ENCODE measurements at regions of chr4 and their contacts with region 1.

Region 1: DNA sequence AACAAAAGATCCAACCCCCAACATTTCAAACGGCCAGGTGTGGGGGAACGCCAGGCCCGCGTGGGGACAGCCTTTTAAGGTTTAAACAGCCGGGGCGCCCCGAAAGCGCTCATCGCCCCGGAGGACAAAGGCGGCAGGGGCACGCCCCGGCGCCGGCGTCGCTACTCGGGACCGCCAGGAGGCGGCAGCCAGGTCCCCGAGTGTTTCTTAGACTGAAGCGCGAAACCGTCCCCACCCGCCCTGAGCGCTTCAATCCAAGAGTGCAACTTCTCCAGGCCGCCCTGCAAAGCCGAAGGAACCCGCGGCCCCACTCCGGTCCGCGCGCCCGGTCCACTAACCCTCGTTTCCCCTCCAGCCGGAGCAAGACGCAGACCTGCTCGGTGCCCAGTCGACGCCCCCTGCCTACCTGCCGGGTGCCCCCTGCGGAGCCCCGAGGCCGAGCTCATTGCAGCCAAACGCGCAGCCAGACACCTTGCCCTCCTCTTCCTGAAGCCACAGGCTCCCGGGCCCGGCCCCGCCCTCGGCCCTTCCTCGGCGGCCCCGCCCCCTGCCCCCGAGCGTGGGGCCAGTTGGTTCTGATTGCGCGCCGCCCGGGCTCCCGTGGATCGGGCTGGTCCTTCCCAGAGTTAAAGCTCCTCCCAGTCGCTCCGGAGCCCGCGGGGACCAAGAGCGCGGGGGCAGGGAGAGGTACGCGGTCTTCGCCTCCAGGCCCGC is at the start of gene CASP6:
- DNase-seq: peak; percentile 73
- ATAC-seq: peak; percentile 83
- H3K4me3 ChIP-seq: peak within 1 kb of the TSS; percentile 96
- H3K27ac ChIP-seq: peak within 1 kb of the TSS; percentile 25; the same call in 1 of the 2 replicates
- H3K4me1 ChIP-seq: peaks cover 9% of the 10 kb centered on the region
- H3K27me3 ChIP-seq: no peaks in the 10 kb centered on the region
- CTCF ChIP-seq: peak; percentile 59
- total RNA-seq, gene CASP6: 33.7 and 36.7 TPM in 2 replicates

Region 2: DNA sequence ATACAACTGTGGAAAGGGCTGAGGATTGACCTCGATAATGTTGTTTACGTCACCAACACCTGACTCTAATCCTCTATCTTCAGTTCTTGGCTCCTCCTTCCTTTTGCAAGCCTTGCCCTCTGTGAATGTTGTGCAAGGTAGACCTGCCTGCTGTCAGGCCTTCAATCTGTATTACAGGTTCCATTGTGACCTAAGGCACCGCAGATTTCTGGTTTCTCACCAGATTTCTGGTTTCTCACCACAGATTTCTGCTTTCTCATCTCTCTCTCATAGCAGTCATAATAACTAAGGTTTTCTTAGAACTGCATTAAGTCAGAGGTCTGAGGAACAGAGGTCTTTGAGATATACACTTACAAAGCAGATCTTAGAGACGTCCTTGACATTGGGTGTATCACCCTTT is 888.8 kb before region 1 on chr4:
- CTCF ChIA-PET with region 1: no interaction called
- POLR2A ChIA-PET with region 1: no interaction called
- intact Hi-C with region 1: no loop called
- DNase-seq: no peak
- ATAC-seq: no peak
- H3K4me3 ChIP-seq: no peak overlapping the region
- H3K27ac ChIP-seq: no peak overlapping the region
- H3K4me1 ChIP-seq: no peaks in the 10 kb centered on the region
- H3K27me3 ChIP-seq: peaks cover 31% of the 10 kb centered on the region; the same call in 1 of the 2 replicates
- CTCF ChIP-seq: no peak

Region 3: GRCh38 chr4:109683621-109684253 is 19.4 kb before region 1 on chr4:
- CTCF ChIA-PET with region 1: no interaction called
- POLR2A ChIA-PET with region 1: no interaction called
- intact Hi-C with region 1: loop called (anchors 2 kb)
- DNase-seq: no peak
- ATAC-seq: no peak
- H3K4me3 ChIP-seq: no peak overlapping the region
- H3K27ac ChIP-seq: no peak overlapping the region
- H3K4me1 ChIP-seq: no peaks in the 10 kb centered on the region
- H3K27me3 ChIP-seq: no peaks in the 10 kb centered on the region
- CTCF ChIP-seq: no peak

Region 4: GRCh38 chr4:109729718-109730618 is 26.9 kb after region 1 on chr4 and contains the start of gene PLA2G12A:
- CTCF ChIA-PET with region 1: no interaction called
- POLR2A ChIA-PET with region 1: no interaction called
- intact Hi-C with region 1: loop called (anchors 1 kb)
- DNase-seq: peak; percentile 87
- ATAC-seq: peak; percentile 72
- H3K4me3 ChIP-seq: peak within 1 kb of the TSS; percentile 99
- H3K27ac ChIP-seq: peak within 1 kb of the TSS; percentile 44
- H3K4me1 ChIP-seq: peaks cover 14% of the 10 kb centered on the region
- H3K27me3 ChIP-seq: no peaks in the 10 kb centered on the region
- CTCF ChIP-seq: no peak
- total RNA-seq, gene PLA2G12A: 51.6 and 53.3 TPM in 2 replicates

Region 5: DNA sequence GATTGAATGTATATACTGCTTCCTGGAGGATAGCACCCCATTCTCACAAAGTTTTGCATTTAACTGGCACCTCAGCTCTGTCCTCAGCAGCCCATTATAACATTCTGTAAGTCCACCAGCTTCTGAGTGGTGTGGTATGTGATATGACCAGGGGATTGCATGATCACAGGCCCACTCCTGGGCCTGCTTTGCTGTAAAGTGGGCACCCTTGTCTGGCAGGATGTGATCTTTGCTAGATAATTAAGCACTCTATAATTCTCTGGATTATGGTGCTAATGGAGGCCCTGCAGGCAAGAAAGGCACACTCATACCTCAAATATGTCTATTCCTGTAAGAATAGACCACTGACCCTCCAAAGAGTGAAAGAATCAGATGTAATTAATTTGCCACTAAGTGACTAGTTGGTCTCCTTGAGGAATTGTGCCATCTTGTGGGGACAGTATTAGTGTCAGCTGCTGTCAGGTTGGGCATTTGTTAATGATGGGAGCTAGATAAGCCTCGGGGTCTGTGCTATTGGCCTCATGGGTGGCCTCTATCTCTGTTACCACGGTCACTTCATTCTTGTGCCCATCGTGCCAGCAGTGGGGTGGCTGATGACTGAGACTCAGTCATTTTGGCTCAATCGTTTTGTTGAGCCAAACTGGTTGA is 100.9 kb after region 1 on chr4:
- CTCF ChIA-PET with region 1: interaction called, 13 read pairs
- POLR2A ChIA-PET with region 1: no interaction called
- intact Hi-C with region 1: loop called (anchors 2 kb)
- DNase-seq: peak; percentile 58
- ATAC-seq: peak; percentile 80
- H3K4me3 ChIP-seq: no peak overlapping the region
- H3K27ac ChIP-seq: no peak overlapping the region
- H3K4me1 ChIP-seq: no peaks in the 10 kb centered on the region
- H3K27me3 ChIP-seq: no peaks in the 10 kb centered on the region
- CTCF ChIP-seq: peak; percentile 68

Region 6: DNA sequence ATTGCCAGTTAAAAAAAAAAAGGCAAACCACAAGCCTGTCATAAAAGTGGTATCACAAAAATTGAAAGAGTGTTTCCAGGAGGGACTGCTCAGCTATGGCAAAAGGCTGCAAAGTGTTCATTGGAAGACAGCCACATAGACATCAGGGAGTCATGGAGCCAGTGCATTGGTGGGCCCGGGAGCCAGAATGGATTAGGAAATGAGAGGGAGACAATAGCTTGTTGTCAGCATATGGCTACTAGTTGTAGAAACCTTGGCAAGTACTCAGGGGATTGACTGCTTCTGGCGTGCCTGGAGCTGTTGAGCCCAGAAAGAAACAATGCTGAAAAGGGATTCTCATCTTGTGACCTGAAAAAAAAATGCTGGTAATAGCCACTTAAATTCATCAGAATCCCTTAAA is 117.5 kb after region 1 on chr4:
- CTCF ChIA-PET with region 1: no interaction called
- POLR2A ChIA-PET with region 1: no interaction called
- intact Hi-C with region 1: loop called (anchors 5 kb)
- DNase-seq: no peak
- ATAC-seq: no peak
- H3K4me3 ChIP-seq: no peak overlapping the region
- H3K27ac ChIP-seq: no peak overlapping the region
- H3K4me1 ChIP-seq: peaks cover 8% of the 10 kb centered on the region; the same call in 1 of the 2 replicates
- H3K27me3 ChIP-seq: no peaks in the 10 kb centered on the region
- CTCF ChIP-seq: no peak

Region 7: GRCh38 chr4:110681381-110681780 is 978.3 kb after region 1 on chr4:
- CTCF ChIA-PET with region 1: no interaction called
- POLR2A ChIA-PET with region 1: no interaction called
- intact Hi-C with region 1: no loop called
- DNase-seq: no peak
- ATAC-seq: no peak
- H3K4me3 ChIP-seq: no peak overlapping the region
- H3K27ac ChIP-seq: no peak overlapping the region
- H3K4me1 ChIP-seq: 0 out of 2 replicates have a peak, but pooled peaks cover 7% of the 10 kb centered on the region
- H3K27me3 ChIP-seq: peaks cover 44% of the 10 kb centered on the region
- CTCF ChIP-seq: no peak

Measured in PC-3 (cell line).